HEK293T (cell line): ENCODE measurements at regions of chr11 and their contacts with region 1.

Region 1: GRCh38 chr11:19561011-19561410 is 151.6 kb upstream of the NAV2 start:
- DNase-seq: no peak

Region 2: GRCh38 chr11:19742588-19743292 is 181.7 kb after region 1 on chr11:
- CTCF ChIA-PET with region 1: interaction called, 19 read pairs
- POLR2A ChIA-PET with region 1: no interaction called
- DNase-seq: peak; percentile 71

Region 3: GRCh38 chr11:19903620-19904069 is 342.6 kb after region 1 on chr11:
- CTCF ChIA-PET with region 1: interaction called, 13 read pairs
- POLR2A ChIA-PET with region 1: no interaction called
- DNase-seq: peak; percentile 65